Heart left ventricle (tissue), 16 donors: ENCODE measurements at regions of chr20 and their contacts with region 1.

Region 1: DNA sequence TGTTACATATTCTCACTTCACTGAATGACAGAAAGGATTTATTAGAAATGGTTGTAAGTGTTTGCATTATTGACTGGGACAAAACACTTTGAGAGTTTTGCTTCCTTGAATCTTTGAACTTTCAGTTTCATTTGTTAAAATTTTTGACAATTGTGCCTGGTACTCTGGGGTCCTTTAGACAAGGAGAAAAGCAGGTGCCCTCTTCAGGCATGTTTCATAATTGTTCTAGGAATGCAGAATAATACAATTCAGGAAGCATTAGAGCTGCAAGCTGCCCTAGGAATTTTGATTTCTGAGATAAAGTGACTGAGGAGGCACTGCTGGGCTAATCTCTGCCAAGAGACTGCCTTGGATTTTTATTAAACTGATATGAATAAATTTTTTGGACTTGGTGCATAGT is 49.7 kb downstream of the TOP1 start:
- DNase-seq: peak in 1 of 5 donors; percentile 13
- ATAC-seq: peak in 3 of 4 donors; percentile 69 to 88 (median 72)
- H3K4me3 ChIP-seq: peak overlapping the region in 2 of 12 donors; percentile 7 to 8
- H3K27ac ChIP-seq: peak overlapping the region in 6 of 12 donors; percentile 8 to 56 (median 36)
- H3K4me1 ChIP-seq: peaks cover 0 to 56% (median 35%) of the 10 kb centered on the region in 12 donors
- H3K27me3 ChIP-seq: no peaks in the 10 kb centered on the region
- CTCF ChIP-seq: peak; percentile 36 to 73 (median 53)
- POLR2A ChIP-seq: no peak

Region 2: DNA sequence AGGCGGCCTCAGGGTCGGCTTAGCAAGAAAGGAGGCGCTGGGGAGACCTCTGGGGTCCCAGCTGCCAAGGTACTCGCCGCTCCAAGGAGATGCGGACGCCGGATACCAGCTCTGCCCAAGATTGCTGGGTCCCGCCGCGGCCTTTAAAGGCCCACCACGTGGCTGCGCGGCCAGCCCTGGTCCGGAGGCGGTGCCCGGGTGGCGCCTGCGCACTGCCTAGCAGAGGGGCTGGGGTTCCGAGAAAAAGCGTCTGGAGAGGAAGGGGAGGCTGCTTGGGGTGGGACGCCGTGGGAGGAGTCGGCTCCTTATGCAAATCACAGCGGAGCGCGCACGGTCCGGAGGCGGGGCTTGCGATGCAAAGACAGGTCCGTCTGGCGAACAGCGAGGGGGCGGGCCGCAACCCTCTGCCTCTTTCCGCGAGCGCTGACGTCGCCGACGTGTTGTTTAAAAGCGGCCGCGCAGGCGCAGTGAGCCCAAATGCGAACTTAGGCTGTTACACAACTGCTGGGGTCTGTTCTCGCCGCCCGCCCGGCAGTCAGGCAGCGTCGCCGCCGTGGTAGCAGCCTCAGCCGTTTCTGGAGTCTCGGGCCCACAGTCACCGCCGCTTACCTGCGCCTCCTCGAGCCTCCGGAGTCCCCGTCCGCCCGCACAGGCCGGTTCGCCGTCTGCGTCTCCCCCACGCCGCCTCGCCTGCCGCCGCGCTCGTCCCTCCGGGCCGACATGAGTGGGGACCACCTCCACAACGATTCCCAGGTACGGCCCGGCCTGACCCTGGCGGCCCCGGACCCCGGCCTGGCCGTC is 49.8 kb before region 1 on chr20 and contains the start of gene TOP1:
- intact Hi-C with region 1: loop called in 5 of 10 experiments (anchors 5 kb)
- DNase-seq: peak; percentile 100
- ATAC-seq: peak; percentile 98 to 99 (median 98)
- H3K4me3 ChIP-seq: peak within 1 kb of the TSS; percentile 66 to 99 (median 94)
- H3K27ac ChIP-seq: peak within 1 kb of the TSS; percentile 89 to 99 (median 94)
- H3K4me1 ChIP-seq: peaks cover 4 to 46% (median 38%) of the 10 kb centered on the region in 12 donors
- H3K27me3 ChIP-seq: no peaks in the 10 kb centered on the region
- CTCF ChIP-seq: peak in 1 of 12 donors; percentile 24
- POLR2A ChIP-seq: peak; percentile 94 to 99
- total RNA-seq, gene TOP1: 15.0 to 32.3 (median 21.8) TPM

Region 3: GRCh38 chr20:41047975-41048305 is 30.4 kb before region 1 on chr20:
- intact Hi-C with region 1: loop called in 1 of 10 experiments (anchors 5 kb)
- DNase-seq: no peak
- ATAC-seq: peak in 3 of 4 donors; percentile 29 to 61 (median 46)
- H3K4me3 ChIP-seq: peak overlapping the region in 9 of 12 donors; percentile 11 to 54 (median 23)
- H3K27ac ChIP-seq: peak overlapping the region in 10 of 12 donors; percentile 5 to 88 (median 36)
- H3K4me1 ChIP-seq: peaks cover 11 to 90% (median 77%) of the 10 kb centered on the region in 12 donors
- H3K27me3 ChIP-seq: no peaks in the 10 kb centered on the region
- CTCF ChIP-seq: no peak
- POLR2A ChIP-seq: no peak

Region 4: GRCh38 chr20:41064377-41064776 is 14.0 kb before region 1 on chr20:
- intact Hi-C with region 1: no loop called
- DNase-seq: no peak
- ATAC-seq: no peak
- H3K4me3 ChIP-seq: no peak overlapping the region
- H3K27ac ChIP-seq: no peak overlapping the region
- H3K4me1 ChIP-seq: peaks cover 0 to 35% (median 5%) of the 10 kb centered on the region in 12 donors
- H3K27me3 ChIP-seq: no peaks in the 10 kb centered on the region
- CTCF ChIP-seq: no peak
- POLR2A ChIP-seq: no peak